Mammary epithelial cell (primary cell): ENCODE measurements at regions of chr6 and their contacts with region 1.

Region 1: DNA sequence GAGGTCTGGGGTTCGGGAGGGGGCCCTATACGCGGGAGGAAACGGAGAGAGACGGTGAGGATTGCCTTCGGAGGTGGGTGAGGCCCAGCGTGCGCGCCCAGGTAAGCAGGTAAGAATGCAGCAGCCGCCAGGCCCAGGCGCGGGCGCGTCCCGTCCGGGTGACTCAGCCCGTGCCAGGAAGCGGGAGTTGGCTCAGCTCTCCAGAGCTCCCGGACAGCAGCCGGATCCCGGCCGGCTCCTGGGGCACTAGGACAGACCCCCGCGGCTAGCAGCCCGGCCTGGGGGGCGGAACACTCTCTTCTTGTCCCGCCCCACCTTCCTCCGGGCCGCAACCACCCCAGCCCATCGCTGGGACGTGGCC is 1.5 kb upstream of the MDFI start:
- DNase-seq: peak; percentile 91
- H3K4me3 ChIP-seq: peak overlapping the region; percentile 54 to 80 (median 76)
- H3K27ac ChIP-seq: peak overlapping the region; percentile 83
- H3K4me1 ChIP-seq: peaks cover 41% of the 10 kb centered on the region
- H3K27me3 ChIP-seq: no peaks in the 10 kb centered on the region
- CTCF ChIP-seq: no peak

Region 2: DNA sequence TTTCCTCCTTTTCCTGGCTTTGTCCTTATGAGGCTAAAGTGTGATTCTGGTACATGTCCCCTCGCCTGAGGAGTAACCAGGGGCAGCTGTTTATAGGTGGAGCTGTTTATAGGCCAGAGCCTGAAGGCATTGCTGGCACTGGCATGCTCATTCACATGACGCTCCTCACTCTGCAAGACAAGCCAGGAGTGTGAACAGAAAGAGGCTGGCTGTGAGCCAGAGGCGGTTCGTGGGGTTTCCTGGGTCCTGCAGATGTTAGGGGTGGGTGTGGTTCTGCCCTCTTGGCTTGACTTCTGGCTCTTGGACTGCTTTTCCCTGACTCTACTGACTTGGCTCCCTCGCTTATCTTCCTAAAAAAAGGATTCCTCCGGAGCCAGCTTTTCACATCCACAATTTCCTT is 11.4 kb before region 1 on chr6:
- CTCF ChIA-PET with region 1: no interaction called
- dilution Hi-C with region 1: no loop called
- in situ Hi-C with region 1: no loop called
- intact Hi-C with region 1: loop called (anchors 1 kb)
- DNase-seq: peak; percentile 79
- H3K4me3 ChIP-seq: no peak overlapping the region
- H3K27ac ChIP-seq: peak overlapping the region; percentile 9
- H3K4me1 ChIP-seq: peaks cover 60% of the 10 kb centered on the region
- H3K27me3 ChIP-seq: no peaks in the 10 kb centered on the region
- CTCF ChIP-seq: no peak

Region 3: DNA sequence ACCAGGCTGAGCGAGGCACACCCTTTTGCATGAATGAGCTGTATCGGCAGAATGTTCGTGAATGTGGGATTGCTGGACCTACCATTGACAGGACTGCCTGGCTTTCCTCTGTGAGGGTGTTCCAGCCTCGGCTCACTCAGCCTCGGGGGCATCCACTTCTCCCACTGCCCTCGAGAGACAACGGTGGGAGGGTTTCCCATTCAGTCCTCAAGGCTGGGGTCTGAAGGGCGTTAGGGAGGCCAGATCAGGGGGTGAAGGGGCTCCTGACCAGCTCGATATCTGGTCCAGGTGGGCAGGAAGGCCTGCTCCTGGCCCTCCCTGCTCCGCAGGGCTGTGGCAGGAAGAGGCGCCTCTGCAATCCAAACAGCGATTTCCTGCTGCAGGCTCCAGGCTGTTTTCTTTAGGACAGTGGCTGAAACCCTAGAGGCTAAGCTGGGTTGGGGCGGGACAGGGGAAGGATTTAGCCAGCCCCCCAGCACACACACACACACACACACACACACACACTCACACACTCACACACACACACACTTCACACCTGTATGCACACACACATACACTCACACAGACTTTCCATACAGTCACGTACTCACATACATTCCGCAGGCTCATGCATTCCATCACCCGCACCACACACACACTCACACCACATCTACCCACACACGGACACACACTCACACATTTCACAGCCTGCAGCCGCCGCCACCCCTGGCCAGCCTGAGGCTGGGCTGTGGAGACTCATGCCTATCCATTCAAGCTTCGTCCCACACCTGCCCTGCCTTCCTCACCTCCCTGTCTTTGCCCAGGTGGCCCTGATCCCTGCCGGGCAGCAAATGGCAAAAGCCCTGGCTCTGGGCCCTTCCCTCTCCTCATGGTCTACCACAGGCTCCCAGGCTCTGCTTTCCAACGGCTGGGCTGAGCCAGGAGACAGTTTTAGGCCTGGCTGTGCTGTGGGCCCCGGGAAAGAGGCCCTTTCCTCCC is 19.2 kb after region 1 on chr6:
- CTCF ChIA-PET with region 1: no interaction called
- dilution Hi-C with region 1: no loop called
- in situ Hi-C with region 1: no loop called
- intact Hi-C with region 1: no loop called
- DNase-seq: peak; percentile 48
- H3K4me3 ChIP-seq: no peak overlapping the region
- H3K27ac ChIP-seq: no peak overlapping the region
- H3K4me1 ChIP-seq: no peaks in the 10 kb centered on the region
- H3K27me3 ChIP-seq: no peaks in the 10 kb centered on the region
- CTCF ChIP-seq: no peak

Region 4: DNA sequence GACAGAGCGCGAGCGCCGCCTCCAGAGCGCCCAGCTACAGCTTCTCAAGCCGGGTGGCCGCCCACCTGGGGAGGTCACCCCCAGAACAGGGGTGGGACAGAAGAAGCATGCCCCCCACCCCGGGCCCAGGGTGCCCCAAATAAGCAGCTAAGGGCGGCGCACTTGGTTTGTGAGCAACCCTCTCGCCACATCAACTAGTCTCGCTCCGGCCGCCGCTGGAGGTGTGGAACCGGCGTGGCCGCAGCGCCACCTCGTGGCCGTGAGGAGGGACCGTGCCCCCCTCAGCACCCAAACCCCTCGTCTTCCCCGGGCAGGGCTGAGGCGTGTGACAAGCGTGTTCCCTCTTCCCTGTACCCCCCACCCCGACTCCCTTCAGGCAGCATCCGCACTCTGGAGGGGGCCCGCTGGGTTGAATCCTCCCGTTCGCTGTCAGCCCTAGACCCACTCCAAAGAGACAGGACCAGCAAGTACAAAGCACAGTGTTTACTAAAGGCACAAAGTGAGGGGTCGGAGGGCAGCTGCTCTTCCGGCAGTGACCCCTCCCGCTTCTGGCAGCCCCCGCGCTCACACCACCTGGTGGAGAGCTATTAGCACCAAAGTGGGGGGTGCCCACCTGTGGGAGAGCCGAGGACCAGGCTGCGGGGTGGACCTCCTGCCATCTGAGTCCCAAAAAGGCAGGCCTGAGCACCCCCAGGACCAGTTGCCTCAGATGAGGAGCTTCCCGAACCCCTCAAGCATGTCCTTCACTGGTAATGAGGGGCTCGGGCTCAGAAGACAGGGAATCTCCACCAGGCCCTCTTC is 46.9 kb after region 1 on chr6:
- CTCF ChIA-PET with region 1: no interaction called
- dilution Hi-C with region 1: no loop called
- in situ Hi-C with region 1: no loop called
- intact Hi-C with region 1: loop called (anchors 1 kb)
- DNase-seq: peak; percentile 39
- H3K4me3 ChIP-seq: no peak overlapping the region
- H3K27ac ChIP-seq: no peak overlapping the region
- H3K4me1 ChIP-seq: peaks cover 3% of the 10 kb centered on the region
- H3K27me3 ChIP-seq: no peaks in the 10 kb centered on the region
- CTCF ChIP-seq: peak; percentile 75 to 85

Region 5: GRCh38 chr6:41713161-41713649 is 76.4 kb after region 1 on chr6:
- CTCF ChIA-PET with region 1: no interaction called
- dilution Hi-C with region 1: loop called (anchors 5 kb)
- in situ Hi-C with region 1: no loop called
- intact Hi-C with region 1: no loop called
- DNase-seq: peak; percentile 96
- H3K4me3 ChIP-seq: peak overlapping the region in 1 of 3 experiments; percentile 1
- H3K27ac ChIP-seq: peak overlapping the region; percentile 51
- H3K4me1 ChIP-seq: peaks cover 51% of the 10 kb centered on the region
- H3K27me3 ChIP-seq: no peaks in the 10 kb centered on the region
- CTCF ChIP-seq: no peak

Region 6: DNA sequence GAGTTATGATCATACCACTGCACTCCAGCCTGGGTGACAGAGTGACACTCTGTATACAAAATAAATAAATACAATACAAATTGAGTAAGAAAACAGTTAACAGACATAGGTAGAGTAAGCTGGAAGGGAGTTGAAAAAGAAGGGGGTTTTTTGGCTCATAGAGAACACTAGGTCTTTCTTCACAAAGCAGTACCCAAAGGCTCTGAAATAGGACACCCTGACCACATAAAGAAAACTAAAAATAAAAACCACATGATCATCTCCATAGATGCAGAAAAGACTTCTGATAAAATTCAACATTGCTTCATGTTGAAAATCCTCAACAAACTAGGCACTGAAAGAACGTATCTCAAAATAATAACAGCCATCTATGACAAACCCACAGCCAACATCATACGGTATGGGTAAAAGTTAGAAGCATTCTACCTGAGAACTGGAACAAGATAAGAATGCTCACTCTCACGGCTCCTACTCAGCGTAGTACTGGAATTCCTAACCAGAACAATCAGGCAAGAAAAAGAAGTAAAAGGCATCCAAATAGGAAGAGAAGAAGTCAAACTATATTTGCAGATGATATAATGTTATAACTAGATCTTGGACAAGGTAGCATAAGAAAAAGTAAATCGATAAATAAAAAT is 199.3 kb after region 1 on chr6:
- CTCF ChIA-PET with region 1: no interaction called
- dilution Hi-C with region 1: no loop called
- in situ Hi-C with region 1: no loop called
- intact Hi-C with region 1: no loop called
- DNase-seq: peak; percentile 31
- H3K4me3 ChIP-seq: no peak overlapping the region
- H3K27ac ChIP-seq: no peak overlapping the region
- H3K4me1 ChIP-seq: no peaks in the 10 kb centered on the region
- H3K27me3 ChIP-seq: no peaks in the 10 kb centered on the region
- CTCF ChIP-seq: no peak